Activated T-helper 2 cell treated with anti-CD3 and anti-CD28 coated beads, Interferon-gamma antibody, Interleukin-2, Interleukin-4, amounts not matched to agents 10 μg/mL and 5 μg/mL and 100 μg/mL, durations not matched to agents 14 hours and 24 hours and 36 hours (primary cell): ENCODE measurements at regions of chr11 and their contacts with region 1.

Region 1: GRCh38 chr11:117885777-117886176 is 9.3 kb upstream of the FXYD6 start:
- DNase-seq: no peak
- H3K4me3 Mint-ChIP-seq: no peak overlapping the region
- H3K27ac Mint-ChIP-seq: no peak overlapping the region
- H3K4me1 Mint-ChIP-seq: no peaks in the 10 kb centered on the region
- H3K27me3 Mint-ChIP-seq: peaks cover 29% of the 10 kb centered on the region

Region 2: DNA sequence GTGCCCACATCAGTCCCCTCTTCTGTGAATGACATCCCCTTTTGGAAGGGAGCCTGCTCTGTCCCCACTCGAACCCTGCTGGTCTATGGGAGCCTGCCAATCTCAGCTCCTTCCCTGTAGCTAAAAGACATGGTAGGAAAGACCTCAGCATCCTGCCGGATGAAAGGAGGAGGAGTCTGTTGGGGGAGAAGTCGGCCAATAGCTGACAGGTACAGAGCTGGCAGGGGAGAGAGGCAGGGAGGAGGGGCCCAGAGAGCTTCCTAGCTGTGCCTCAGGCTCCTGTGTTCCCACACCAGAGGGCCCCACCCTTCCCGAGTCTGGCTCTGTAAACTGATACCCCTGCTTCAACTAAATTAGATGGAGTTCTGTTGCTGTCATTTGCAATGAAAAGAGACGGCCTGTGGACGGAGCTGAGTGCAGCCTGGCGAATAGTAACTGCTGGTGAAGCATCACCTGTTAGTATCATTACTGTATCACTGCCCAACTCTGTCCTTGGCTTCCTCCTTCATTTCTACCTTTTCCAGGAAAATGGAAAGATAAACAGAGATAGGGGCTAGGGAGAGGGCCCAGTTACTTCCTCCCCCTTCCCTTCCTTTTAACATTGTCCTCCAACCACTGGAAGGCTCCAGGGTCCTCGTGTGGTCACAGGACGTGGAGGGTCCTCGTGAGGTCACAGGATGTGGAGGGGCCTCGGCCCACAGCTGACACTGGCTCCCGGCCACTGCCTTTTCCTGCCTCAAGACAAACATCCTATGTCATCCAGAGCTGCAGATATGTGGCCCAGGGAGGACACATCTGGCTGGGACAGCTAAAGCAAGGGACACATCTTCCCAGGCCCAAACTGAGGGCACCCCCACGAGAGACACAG is 24.4 kb before region 1 on chr11:
- intact Hi-C with region 1: no loop called
- DNase-seq: no peak
- H3K4me3 Mint-ChIP-seq: no peak overlapping the region
- H3K27ac Mint-ChIP-seq: no peak overlapping the region
- H3K4me1 Mint-ChIP-seq: peaks cover 3% of the 10 kb centered on the region
- H3K27me3 Mint-ChIP-seq: peaks cover 10% of the 10 kb centered on the region

Region 3: GRCh38 chr11:117932067-117932370 is 46.2 kb after region 1 on chr11:
- intact Hi-C with region 1: no loop called
- DNase-seq: no peak
- H3K4me3 Mint-ChIP-seq: no peak overlapping the region
- H3K27ac Mint-ChIP-seq: peak overlapping the region; percentile 81
- H3K4me1 Mint-ChIP-seq: peaks cover 62% of the 10 kb centered on the region
- H3K27me3 Mint-ChIP-seq: no peaks in the 10 kb centered on the region

Region 4: GRCh38 chr11:117979481-117980211 is 93.9 kb after region 1 on chr11:
- intact Hi-C with region 1: no loop called
- DNase-seq: no peak
- H3K4me3 Mint-ChIP-seq: no peak overlapping the region
- H3K27ac Mint-ChIP-seq: peak overlapping the region; percentile 88
- H3K4me1 Mint-ChIP-seq: peaks cover 78% of the 10 kb centered on the region
- H3K27me3 Mint-ChIP-seq: no peaks in the 10 kb centered on the region

Region 5: GRCh38 chr11:118560806-118561205 is 675.0 kb after region 1 on chr11:
- intact Hi-C with region 1: loop called (anchors 5 kb)
- DNase-seq: no peak
- H3K4me3 Mint-ChIP-seq: no peak overlapping the region
- H3K27ac Mint-ChIP-seq: no peak overlapping the region
- H3K4me1 Mint-ChIP-seq: peaks cover 8% of the 10 kb centered on the region
- H3K27me3 Mint-ChIP-seq: no peaks in the 10 kb centered on the region